SK-N-SH (cell line): ENCODE measurements at regions of chr3 and their contacts with region 1.

Region 1: GRCh38 chr3:18988614-18989229 is 159.6 kb upstream of the KCNH8 start:
- DNase-seq: peak; percentile 50
- H3K4me3 ChIP-seq: no peak overlapping the region
- H3K27ac ChIP-seq: no peak overlapping the region
- H3K4me1 ChIP-seq: peaks cover 0 to 2% of the 10 kb centered on the region in 2 experiments; a peak in 2 of 4 replicates
- H3K27me3 ChIP-seq: no peaks in the 10 kb centered on the region
- CTCF ChIP-seq: peak; percentile 79
- EP300 ChIP-seq: no peak
- RAD21 ChIP-seq: peak; percentile 93

Region 2: GRCh38 chr3:18847583-18848197 is 141.0 kb before region 1 on chr3:
- CTCF ChIA-PET with region 1: interaction called, 11 read pairs
- POLR2A ChIA-PET with region 1: no interaction called
- DNase-seq: peak; percentile 6
- H3K4me3 ChIP-seq: no peak overlapping the region
- H3K27ac ChIP-seq: no peak overlapping the region
- H3K4me1 ChIP-seq: no peaks in the 10 kb centered on the region
- H3K27me3 ChIP-seq: no peaks in the 10 kb centered on the region
- CTCF ChIP-seq: peak; percentile 58
- EP300 ChIP-seq: no peak
- RAD21 ChIP-seq: peak; percentile 18; the same call in 1 of the 2 replicates

Region 3: GRCh38 chr3:18888368-18888767 is 100.4 kb before region 1 on chr3:
- CTCF ChIA-PET with region 1: interaction called, 11 read pairs
- POLR2A ChIA-PET with region 1: no interaction called
- DNase-seq: no peak
- H3K4me3 ChIP-seq: no peak overlapping the region
- H3K27ac ChIP-seq: no peak overlapping the region
- H3K4me1 ChIP-seq: no peaks in the 10 kb centered on the region; a peak in 1 of 4 replicates
- H3K27me3 ChIP-seq: no peaks in the 10 kb centered on the region
- CTCF ChIP-seq: no peak; the same call in 1 of the 2 replicates
- EP300 ChIP-seq: no peak
- RAD21 ChIP-seq: peak; percentile 21; the same call in 1 of the 2 replicates